Sigmoid colon (tissue), 7 donors: ENCODE measurements at regions of chr17 and their contacts with region 1.

Region 1: DNA sequence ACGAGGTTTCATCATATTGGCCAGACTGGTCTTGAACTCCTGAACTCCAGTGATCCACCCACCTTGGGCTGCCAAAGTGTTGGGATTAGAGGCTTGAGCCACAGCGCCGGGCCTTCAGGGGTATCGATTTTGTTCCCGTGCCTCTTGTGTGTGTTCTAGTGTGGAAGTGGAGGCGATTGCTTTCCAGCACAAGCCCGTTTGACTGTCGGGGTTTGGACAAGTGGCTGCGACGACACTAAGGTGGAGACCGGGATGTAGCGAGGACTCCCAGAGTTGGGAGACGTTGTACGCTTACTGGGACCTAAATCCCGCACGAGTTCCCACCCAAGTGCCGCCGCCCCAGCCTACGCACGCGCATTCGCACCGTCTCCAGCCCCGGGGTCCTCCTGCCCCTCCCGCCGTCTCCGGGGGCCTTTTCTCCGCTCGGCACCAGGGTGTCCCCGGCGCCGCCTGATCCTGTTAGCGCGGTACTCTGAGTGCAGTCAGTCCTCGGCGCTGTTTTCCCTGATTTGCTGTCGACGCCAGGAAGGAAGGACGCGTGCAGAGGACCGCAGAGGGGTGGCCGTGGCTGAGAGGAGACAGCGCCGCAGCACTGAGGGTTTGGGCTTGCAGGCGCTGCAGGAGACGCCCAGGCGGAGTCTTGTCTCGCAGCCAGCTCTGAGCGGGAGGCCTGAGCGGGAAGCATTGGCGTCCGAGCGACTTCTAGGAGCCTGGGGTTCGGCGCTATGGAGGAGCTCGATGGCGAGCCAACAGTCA is at the start of gene NUP85:
- DNase-seq: peak; percentile 97
- H3K4me3 ChIP-seq: peak within 1 kb of the TSS; percentile 69 to 98 (median 87)
- H3K27ac ChIP-seq: peak within 1 kb of the TSS; percentile 91 to 93 (median 92)
- H3K4me1 ChIP-seq: peaks cover 0 to 27% (median 20%) of the 10 kb centered on the region in 4 donors
- H3K27me3 ChIP-seq: no peaks in the 10 kb centered on the region
- CTCF ChIP-seq: peak in 1 of 4 experiments; percentile 11
- EP300 ChIP-seq: no peak
- POLR2A ChIP-seq: peak; percentile 66 to 73
- total RNA-seq, gene NUP85: 21.1 to 32.2 (median 29.7) TPM

Region 2: DNA sequence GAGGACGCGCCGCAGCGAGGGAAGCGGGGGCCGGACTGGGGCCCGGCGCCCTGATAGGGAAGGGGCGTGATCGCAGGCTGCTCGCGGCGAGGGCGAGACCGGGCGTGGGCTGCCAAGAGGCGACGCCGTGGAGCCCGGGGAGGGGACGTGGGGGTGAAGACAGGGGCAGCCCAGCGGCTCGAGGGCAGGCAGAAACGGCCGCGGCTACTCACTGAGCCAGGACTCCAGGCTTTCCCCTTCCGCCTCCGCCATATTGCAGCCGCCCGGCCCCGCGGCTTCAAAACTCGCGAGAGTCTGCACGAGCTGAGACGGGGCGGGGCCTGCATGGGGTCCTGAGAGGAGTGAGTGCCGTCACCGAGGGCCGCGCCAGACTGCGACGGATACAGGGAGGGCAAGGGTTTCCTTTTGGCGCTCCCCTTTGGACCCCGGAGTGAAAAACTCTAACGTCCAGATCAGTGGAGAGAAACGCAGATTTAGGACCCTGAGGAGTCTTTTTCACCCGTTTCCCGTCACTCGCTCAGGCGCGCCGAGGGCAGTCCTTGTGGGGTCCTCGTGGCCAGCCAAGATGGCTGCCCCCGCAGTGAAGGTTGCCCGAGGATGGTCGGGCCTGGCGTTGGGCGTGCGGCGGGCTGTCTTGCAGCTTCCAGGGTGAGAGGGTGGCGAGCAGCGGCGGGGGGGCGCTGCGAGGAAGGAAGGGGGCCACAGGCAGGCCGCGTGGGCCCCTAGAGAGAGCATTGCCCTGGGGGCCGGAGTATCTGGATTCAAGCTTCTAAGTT is 56.3 kb after region 1 on chr17 and contains the starts of genes GGA3 and MRPS7:
- intact Hi-C with region 1: loop called (anchors 2 kb)
- DNase-seq: peak; percentile 96
- H3K4me3 ChIP-seq: peak within 1 kb of the TSS; percentile 72 to 99 (median 92)
- H3K27ac ChIP-seq: peak within 1 kb of the TSS; percentile 87 to 96 (median 94)
- H3K4me1 ChIP-seq: peaks cover 0 to 34% (median 32%) of the 10 kb centered on the region in 4 donors
- H3K27me3 ChIP-seq: no peaks in the 10 kb centered on the region
- CTCF ChIP-seq: no peak
- EP300 ChIP-seq: no peak
- POLR2A ChIP-seq: peak; percentile 53 to 67
- total RNA-seq, gene GGA3: 16.0 to 22.1 (median 17.9) TPM
- total RNA-seq, gene MRPS7: 26.6 to 51.5 (median 39.2) TPM